Common myeloid progenitor, CD34-positive (primary cell): ENCODE measurements at regions of chr18 and their contacts with region 1.

Region 1: DNA sequence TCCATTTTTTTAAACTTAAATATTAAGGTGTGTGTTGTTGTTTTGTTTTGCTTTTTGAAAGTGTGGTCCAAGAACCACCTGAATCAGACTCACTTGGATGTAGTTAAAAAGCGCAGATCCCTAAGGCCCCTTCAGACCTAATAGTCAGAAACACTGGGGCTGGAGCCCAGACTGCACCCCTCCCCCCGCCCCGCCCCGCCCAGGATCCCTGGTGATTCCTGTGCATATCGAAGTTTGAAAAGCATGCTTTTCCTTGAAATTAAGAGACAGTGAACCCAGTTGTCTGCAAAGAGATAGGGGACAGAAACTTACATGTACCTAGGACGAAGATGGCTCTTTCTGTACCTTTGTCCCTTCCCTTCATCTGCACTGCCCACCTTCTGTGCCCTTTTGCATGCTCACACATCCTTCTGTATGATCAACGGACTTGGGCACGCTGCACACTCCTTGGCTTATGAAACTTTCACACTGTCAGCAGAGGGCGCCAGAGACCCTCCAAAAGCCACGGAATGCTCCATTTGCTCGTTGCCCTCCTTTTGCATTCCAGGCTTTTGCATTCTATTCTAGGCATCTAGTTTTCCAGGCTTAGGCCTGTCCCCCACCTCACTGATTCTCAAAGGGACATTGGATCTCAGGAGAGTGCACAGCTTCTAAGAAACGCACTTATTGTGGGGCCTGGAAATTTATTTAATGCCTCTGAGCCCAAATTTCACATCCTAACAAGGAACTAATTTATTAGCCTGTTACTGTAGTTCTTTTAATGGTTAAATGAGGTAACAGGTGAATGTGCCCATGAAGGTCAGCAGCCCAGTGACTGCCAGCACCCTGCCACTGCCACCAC is 32.8 kb upstream of the SLC14A1 start:
- DNase-seq: peak; percentile 76 to 87 (median 81)
- H3K4me3 ChIP-seq: no peak overlapping the region
- H3K27ac ChIP-seq: no peak overlapping the region
- H3K4me1 ChIP-seq: peaks cover 20 to 37% (median 29%) of the 10 kb centered on the region in 4 experiments
- H3K27me3 ChIP-seq: no peaks in the 10 kb centered on the region

Region 2: GRCh38 chr18:45670281-45670962 is 20.8 kb before region 1 on chr18:
- CTCF ChIA-PET with region 1: interaction called, 325 read pairs
- POLR2A ChIA-PET with region 1: interaction called, 10 read pairs
- DNase-seq: peak; percentile 89 to 98 (median 96)
- H3K4me3 ChIP-seq: peak overlapping the region in 2 of 7 experiments; percentile 13 to 39
- H3K27ac ChIP-seq: peak overlapping the region; percentile 55 to 58
- H3K4me1 ChIP-seq: peaks cover 25 to 63% (median 50%) of the 10 kb centered on the region in 4 experiments
- H3K27me3 ChIP-seq: no peaks in the 10 kb centered on the region